ENCODE measurements at regions of chr12 and their contacts with region 1.

Region 1: GRCh38 chr12:12736759-12737676 is 19.9 kb downstream of the CDKN1B start:
- DNase-seq: peak; percentile 73
- H3K4me3 ChIP-seq: no peak overlapping the region; a peak in 1 of 4 replicates
- H3K27ac ChIP-seq: peak overlapping the region in 1 of 2 experiments; percentile 41; a peak in 2 of 4 replicates
- H3K4me1 ChIP-seq: peaks cover 0 to 4% of the 10 kb centered on the region in 2 experiments; a peak in 2 of 4 replicates
- H3K27me3 ChIP-seq: no peaks in the 10 kb centered on the region
- CTCF ChIP-seq: peak; percentile 78
- EP300 ChIP-seq: no peak
- RAD21 ChIP-seq: peak; percentile 64

Region 2: DNA sequence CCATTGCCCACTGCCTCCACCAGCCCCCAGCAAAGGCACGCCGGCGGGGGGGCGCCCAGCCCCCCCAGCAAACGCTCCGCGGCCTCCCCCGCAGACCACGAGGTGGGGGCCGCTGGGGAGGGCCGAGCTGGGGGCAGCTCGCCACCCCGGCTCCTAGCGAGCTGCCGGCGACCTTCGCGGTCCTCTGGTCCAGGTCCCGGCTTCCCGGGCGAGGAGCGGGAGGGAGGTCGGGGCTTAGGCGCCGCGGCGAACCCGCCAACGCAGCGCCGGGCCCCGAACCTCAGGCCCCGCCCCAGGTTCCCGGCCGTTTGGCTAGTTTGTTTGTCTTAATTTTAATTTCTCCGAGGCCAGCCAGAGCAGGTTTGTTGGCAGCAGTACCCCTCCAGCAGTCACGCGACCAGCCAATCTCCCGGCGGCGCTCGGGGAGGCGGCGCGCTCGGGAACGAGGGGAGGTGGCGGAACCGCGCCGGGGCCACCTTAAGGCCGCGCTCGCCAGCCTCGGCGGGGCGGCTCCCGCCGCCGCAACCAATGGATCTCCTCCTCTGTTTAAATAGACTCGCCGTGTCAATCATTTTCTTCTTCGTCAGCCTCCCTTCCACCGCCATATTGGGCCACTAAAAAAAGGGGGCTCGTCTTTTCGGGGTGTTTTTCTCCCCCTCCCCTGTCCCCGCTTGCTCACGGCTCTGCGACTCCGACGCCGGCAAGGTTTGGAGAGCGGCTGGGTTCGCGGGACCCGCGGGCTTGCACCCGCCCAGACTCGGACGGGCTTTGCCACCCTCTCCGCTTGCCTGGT is 20.0 kb before region 1 on chr12 and contains the start of gene CDKN1B:
- CTCF ChIA-PET with region 1: interaction called, 28 read pairs
- POLR2A ChIA-PET with region 1: interaction called, 3 read pairs
- DNase-seq: peak; percentile 94
- H3K4me3 ChIP-seq: peak within 1 kb of the TSS; percentile 67 to 81
- H3K27ac ChIP-seq: peak within 1 kb of the TSS; percentile 94 to 98
- H3K4me1 ChIP-seq: peaks cover 26 to 34% of the 10 kb centered on the region in 2 experiments; a peak in 3 of 4 replicates
- H3K27me3 ChIP-seq: no peaks in the 10 kb centered on the region
- CTCF ChIP-seq: no peak
- EP300 ChIP-seq: peak; percentile 29 to 49; a peak in 3 of 4 replicates
- RAD21 ChIP-seq: no peak
- polyA plus RNA-seq, gene CDKN1B: 6.8 and 9.2 TPM in 2 replicates

Region 3: GRCh38 chr12:12724661-12725545 is 12.1 kb before region 1 on chr12:
- CTCF ChIA-PET with region 1: interaction called, 28 read pairs
- POLR2A ChIA-PET with region 1: interaction called, 13 read pairs
- DNase-seq: peak; percentile 72
- H3K4me3 ChIP-seq: peak overlapping the region; percentile 62 to 81
- H3K27ac ChIP-seq: peak overlapping the region; percentile 94 to 98
- H3K4me1 ChIP-seq: peaks cover 20 to 23% of the 10 kb centered on the region in 2 experiments; a peak in 3 of 4 replicates
- H3K27me3 ChIP-seq: no peaks in the 10 kb centered on the region
- CTCF ChIP-seq: no peak
- EP300 ChIP-seq: no peak
- RAD21 ChIP-seq: no peak

Region 4: DNA sequence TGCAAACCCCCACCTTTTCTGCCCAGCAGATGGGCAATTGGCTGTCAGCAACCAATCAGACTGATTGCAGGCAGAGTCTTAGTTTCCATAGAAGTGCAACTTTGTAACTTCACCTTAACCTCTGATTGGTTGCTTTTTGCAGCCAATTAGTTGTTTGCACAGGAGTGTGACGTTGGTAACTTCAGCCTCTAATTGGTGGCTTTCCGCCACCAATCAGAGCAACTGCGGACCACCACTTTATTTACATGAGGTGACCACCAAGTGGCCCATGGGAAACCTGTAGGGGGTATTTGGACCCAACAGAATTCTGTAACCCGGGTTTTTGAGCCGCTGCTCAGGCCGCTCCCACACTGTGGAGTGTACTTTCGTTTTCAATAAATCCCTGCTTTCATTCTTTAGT is 12.4 kb after region 1 on chr12:
- CTCF ChIA-PET with region 1: interaction called, 39 read pairs
- POLR2A ChIA-PET with region 1: no interaction called
- DNase-seq: no peak
- H3K4me3 ChIP-seq: peak overlapping the region in 1 of 2 experiments; percentile 9; a peak in 1 of 4 replicates
- H3K27ac ChIP-seq: no peak overlapping the region
- H3K4me1 ChIP-seq: peaks cover 4 to 10% of the 10 kb centered on the region in 2 experiments; a peak in 2 of 4 replicates
- H3K27me3 ChIP-seq: no peaks in the 10 kb centered on the region
- CTCF ChIP-seq: no peak
- EP300 ChIP-seq: no peak
- RAD21 ChIP-seq: no peak